HepG2 (cell line): ENCODE measurements at regions of chr1 and their contacts with region 1.

Region 1: GRCh38 chr1:212284744-212285684 is at the start of gene PPP2R5A:
- DNase-seq: peak; percentile 97
- ATAC-seq: peak; percentile 93
- H3K4me3 ChIP-seq: peak within 1 kb of the TSS; percentile 85 to 98 (median 96)
- H3K27ac ChIP-seq: peak within 1 kb of the TSS; percentile 91
- H3K4me1 ChIP-seq: peaks cover 32% of the 10 kb centered on the region
- H3K27me3 ChIP-seq: no peaks in the 10 kb centered on the region; a peak in 1 of 5 replicates
- CTCF ChIP-seq: peak; percentile 85
- EP300 ChIP-seq: 0 out of 4 replicates have a peak, but pooled peaks of 1 of the 2 experiments have one; percentile 9
- POLR2A ChIP-seq: peak; percentile 71 to 72
- RAD21 ChIP-seq: peak; percentile 66; the same call in 1 of the 2 replicates
- total RNA-seq, gene PPP2R5A: 22.0 and 26.5 TPM in 2 replicates

Region 2: DNA sequence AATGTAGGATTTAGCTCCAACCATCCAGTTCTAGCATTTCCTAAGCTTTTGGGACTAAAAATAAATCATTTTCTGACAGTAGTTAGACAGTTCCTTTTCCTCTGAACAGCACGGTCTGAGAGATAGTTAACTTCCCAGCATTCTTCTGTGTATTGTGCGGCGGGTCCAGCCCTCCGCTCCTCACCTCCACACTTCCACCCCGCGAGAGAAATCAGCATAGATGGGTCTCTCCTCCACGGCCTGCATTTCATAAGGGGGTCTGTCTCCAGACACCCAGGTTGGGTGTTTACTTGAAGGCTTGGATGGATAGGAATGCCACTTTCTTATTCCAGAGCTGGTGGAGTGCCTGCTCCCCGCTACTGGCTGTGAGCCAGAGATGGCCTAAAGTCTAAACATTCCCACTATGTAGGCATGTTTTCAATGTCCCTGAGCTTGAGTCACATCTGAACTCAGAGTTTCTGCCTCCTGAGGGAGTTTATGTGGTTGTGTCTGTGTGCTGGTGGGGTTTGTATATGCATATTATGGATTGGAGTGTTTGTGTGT is 37.8 kb before region 1 on chr1:
- CTCF ChIA-PET with region 1: no interaction called
- POLR2A ChIA-PET with region 1: interaction called, 14 read pairs
- in situ Hi-C with region 1: no loop called
- intact Hi-C with region 1: loop called (anchors 5 kb)
- DNase-seq: peak; percentile 63
- ATAC-seq: peak; percentile 80
- H3K4me3 ChIP-seq: peak overlapping the region; percentile 35 to 60 (median 48); a peak in 4 of 6 replicates
- H3K27ac ChIP-seq: no peak overlapping the region
- H3K4me1 ChIP-seq: peaks cover 72% of the 10 kb centered on the region
- H3K27me3 ChIP-seq: peaks cover 0 to 2% of the 10 kb centered on the region in 2 experiments; a peak in 1 of 5 replicates
- CTCF ChIP-seq: no peak
- EP300 ChIP-seq: no peak
- POLR2A ChIP-seq: no peak
- RAD21 ChIP-seq: no peak

Region 3: GRCh38 chr1:212256369-212256768 is 28.6 kb before region 1 on chr1:
- CTCF ChIA-PET with region 1: no interaction called
- POLR2A ChIA-PET with region 1: interaction called, 23 read pairs
- in situ Hi-C with region 1: no loop called
- intact Hi-C with region 1: loop called (anchors 1 kb)
- DNase-seq: no peak
- ATAC-seq: no peak
- H3K4me3 ChIP-seq: peak overlapping the region in 2 of 3 experiments; percentile 20 to 59; a peak in 3 of 6 replicates
- H3K27ac ChIP-seq: peak overlapping the region; percentile 82
- H3K4me1 ChIP-seq: peaks cover 88% of the 10 kb centered on the region
- H3K27me3 ChIP-seq: no peaks in the 10 kb centered on the region
- CTCF ChIP-seq: no peak
- EP300 ChIP-seq: no peak
- POLR2A ChIP-seq: no peak
- RAD21 ChIP-seq: no peak